ENCODE measurements at regions of chr13 and their contacts with region 1.

Region 1: GRCh38 chr13:106548064-106548696 is 12.7 kb upstream of the EFNB2 start:
- DNase-seq: no peak
- H3K4me3 ChIP-seq: no peak overlapping the region
- H3K4me3 Mint-ChIP-seq: no peak overlapping the region
- H3K27ac ChIP-seq: no peak overlapping the region
- H3K27ac Mint-ChIP-seq: peak overlapping the region in 1 of 7 donors; percentile 1
- H3K4me1 ChIP-seq: peaks cover 4% of the 10 kb centered on the region
- H3K4me1 Mint-ChIP-seq: peaks cover 20 to 39% (median 32%) of the 10 kb centered on the region in 4 donors
- H3K27me3 ChIP-seq: no peaks in the 10 kb centered on the region
- H3K27me3 Mint-ChIP-seq: no peaks in the 10 kb centered on the region

Region 2: DNA sequence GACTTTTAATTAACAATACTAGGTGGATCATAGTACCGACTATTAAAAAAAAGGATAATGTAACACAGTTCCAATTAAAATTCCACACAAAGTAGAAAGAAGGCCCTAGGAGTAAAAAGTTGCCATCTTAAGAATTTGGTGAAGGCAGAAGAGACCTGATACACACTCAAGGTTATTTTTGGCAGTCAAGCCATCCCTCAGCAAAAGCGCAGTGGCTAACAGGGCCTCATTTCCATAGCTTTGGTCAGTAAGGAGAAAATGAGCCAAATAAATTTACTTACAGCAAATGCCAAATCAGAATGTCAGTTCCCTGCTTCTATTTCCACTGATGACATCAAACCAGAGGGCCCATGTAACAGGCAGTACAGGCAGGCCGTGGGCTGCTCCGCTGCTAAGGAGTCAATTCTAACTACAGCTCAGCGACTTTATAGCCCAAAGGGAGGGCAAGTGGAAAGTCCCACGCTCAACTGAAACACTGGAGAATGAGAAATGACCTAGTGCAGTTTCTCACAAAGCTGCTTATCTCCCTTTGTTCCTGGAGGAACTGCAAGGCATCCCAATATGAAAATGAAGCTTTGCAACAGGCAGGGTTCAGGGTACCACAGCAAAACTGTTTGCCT is 13.5 kb after region 1 on chr13:
- CTCF ChIA-PET with region 1: interaction called, 4 read pairs
- POLR2A ChIA-PET with region 1: interaction called, 3 read pairs
- intact Hi-C with region 1: loop called (anchors 2 kb)
- DNase-seq: peak in 3 of 5 donors; percentile 9 to 58 (median 26)
- H3K4me3 ChIP-seq: no peak overlapping the region
- H3K4me3 Mint-ChIP-seq: peak overlapping the region in 7 of 8 donors; percentile 9 to 78 (median 52)
- H3K27ac ChIP-seq: peak overlapping the region; percentile 22
- H3K27ac Mint-ChIP-seq: peak overlapping the region in 5 of 7 donors; percentile 36 to 55 (median 43)
- H3K4me1 ChIP-seq: peaks cover 75% of the 10 kb centered on the region
- H3K4me1 Mint-ChIP-seq: peaks cover 61 to 87% (median 73%) of the 10 kb centered on the region in 4 donors
- H3K27me3 ChIP-seq: no peaks in the 10 kb centered on the region
- H3K27me3 Mint-ChIP-seq: no peaks in the 10 kb centered on the region